ENCODE measurements at regions of chr14 and their contacts with region 1.

Region 1: GRCh38 chr14:22918804-22919600 is at the start of gene RBM23:
- DNase-seq: peak; percentile 100
- total RNA-seq, gene RBM23: 48.1 TPM

Region 2: GRCh38 chr14:22872033-22872832 is 46.8 kb before region 1 on chr14:
- intact Hi-C with region 1: loop called (anchors 5 kb)
- DNase-seq: peak; percentile 92